ENCODE measurements at regions of chr1 and their contacts with region 1.

Region 1: GRCh38 chr1:151739590-151740375 is 18.5 kb downstream of the RIIAD1 start:
- H3K4me3 ChIP-seq: no peak overlapping the region
- H3K27ac ChIP-seq: no peak overlapping the region
- H3K4me1 ChIP-seq: no peaks in the 10 kb centered on the region
- CTCF ChIP-seq: no peak

Region 2: DNA sequence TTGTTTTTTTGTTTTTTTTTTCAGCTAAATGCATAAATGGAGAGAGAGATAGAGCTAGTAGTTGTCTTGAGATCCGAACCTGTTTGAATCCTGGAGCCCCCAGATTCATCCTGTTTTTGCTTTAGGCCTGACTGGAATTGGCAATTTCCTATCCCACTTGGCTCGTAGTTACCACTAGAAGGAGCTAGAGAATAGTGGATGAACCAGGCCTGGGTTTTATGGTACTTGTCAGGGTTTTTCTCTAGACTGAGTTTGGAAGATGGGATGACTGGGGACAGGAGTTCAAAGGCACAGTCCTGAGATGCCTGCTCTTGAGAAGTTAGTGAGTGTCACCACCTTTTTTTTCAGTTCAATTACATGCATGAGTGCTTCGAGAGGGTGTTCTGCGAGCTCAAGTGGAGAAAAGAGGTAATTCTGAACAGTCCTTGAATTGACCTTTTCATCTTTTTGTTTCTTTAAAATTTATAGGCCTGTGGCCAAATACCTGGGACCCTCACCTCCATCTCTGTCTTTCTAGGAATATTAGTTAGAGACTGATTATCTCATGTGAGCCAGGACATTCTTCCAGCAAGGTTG is 46.6 kb before region 1 on chr1:
- CTCF ChIA-PET with region 1: interaction called, 11 read pairs
- POLR2A ChIA-PET with region 1: no interaction called
- H3K4me3 ChIP-seq: no peak overlapping the region
- H3K27ac ChIP-seq: no peak overlapping the region
- H3K4me1 ChIP-seq: no peaks in the 10 kb centered on the region
- CTCF ChIP-seq: peak; percentile 63; the same call in 1 of the 2 replicates

Region 3: DNA sequence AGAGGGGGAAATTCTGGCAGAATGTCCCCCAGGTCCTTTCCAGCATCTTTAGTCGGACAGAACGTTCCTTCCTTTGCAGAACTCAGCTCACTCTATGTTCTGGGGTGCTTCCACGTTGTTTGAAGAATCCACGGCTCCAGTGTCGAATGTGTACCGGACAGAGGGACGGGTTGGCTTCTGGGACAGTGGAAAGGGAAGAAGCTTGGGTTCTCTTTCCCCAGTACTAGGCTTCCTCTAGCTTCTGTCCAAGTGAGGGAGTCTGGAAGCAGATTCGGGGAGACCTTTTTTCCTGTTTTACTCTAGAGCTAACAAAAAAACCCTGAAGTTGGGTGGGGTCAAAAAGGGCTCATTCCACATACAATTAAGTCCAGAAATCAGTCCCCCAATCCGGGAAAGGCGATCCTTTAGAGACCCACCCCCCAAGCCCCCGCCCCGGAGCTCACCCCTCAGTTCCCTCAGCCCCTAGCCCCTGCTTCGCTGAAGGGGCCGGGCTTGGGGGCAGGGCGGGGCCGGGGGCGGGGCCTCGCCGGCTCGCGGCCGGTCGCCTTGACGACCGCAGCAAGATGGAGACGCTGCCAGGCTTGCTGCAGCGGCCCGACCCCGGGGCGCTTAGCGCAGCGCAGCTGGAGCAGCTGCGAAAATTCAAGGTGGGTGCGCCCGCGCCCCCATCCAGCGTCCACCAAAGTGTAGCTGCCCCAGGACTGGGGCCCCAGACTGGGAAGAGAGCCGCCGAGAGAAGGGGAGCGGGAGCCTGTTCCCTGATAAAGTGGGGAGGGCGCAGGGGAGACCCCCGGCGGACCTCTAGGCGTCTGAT is 18.6 kb before region 1 on chr1 and contains the start of gene RIIAD1:
- CTCF ChIA-PET with region 1: interaction called, 12 read pairs
- POLR2A ChIA-PET with region 1: no interaction called
- H3K4me3 ChIP-seq: peak within 1 kb of the TSS; percentile 26
- H3K27ac ChIP-seq: no peak within 1 kb of the TSS
- H3K4me1 ChIP-seq: no peaks in the 10 kb centered on the region
- CTCF ChIP-seq: no peak

Region 4: DNA sequence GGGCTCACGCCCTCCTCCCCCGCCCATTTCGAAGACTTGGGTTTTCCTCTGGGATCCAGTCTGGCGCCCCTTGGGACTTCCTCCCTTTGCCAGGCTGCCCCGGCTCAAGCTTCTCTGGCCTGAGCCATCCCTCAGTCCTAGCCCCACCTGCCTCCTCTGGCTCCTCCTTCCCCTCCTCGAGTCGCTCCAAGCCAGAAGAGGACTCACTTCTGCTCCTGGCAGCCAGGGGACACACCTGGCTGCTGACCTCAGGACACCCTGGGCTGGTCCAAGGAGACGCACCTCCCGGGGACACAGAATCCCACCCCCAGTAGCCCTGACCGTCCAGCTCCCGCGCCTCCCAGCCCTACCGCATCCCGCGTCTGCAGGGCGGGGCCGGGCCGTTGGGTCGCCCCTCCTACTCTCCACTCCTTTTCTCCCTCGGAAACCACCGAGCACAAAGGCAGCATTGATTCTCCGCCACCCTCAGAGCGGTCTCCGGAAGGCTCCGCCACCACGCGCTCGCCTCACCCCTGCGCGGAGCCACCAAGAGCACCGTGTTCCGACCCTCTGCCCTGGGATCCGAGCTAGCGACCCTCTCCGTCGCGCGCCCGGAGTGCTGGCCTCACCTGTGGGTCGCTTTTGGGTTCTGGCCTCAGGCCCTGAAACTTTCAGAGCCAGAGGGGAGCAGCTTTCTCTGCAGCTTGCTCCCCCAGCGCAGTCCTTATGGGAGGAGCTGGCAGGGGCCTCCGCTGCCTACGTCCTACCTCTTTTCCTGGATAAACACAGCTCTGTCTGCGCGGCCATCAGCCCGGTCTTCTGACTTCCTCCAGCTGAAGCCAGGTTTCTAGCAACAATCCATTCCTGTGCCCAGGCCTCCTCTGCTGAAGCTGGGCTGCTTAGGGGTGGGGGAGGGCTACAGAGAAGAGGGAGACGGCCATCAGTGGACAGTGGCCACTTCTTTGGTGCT is 99.9 kb after region 1 on chr1 and contains the start of gene C2CD4D:
- CTCF ChIA-PET with region 1: interaction called, 14 read pairs
- POLR2A ChIA-PET with region 1: no interaction called
- H3K4me3 ChIP-seq: no peak within 1 kb of the TSS
- H3K27ac ChIP-seq: no peak within 1 kb of the TSS
- H3K4me1 ChIP-seq: no peaks in the 10 kb centered on the region
- CTCF ChIP-seq: no peak

Measured in HEK293 (cell line).